Common myeloid progenitor, CD34-positive (primary cell): ENCODE measurements at regions of chr6 and their contacts with region 1.

Region 1: DNA sequence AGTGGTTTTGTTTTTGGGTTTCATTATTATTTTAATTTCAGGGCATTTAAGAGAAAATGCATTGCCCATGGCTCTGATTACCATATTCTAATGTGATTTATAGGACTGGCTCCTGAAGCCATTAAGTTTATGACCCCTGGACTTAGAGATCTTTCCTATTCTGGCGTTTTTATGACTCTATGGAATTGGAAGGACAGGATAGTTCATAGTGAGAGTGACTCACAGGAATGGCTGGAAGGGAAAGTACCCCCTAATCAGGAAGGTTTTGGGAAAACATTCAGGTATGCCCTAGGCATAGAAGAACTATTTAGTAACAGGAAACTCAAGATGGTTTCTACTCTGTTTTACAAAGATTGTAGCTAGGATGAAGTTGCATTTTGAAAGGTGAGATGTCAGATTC is 108.6 kb upstream of the SLC2A12 start:
- DNase-seq: no peak
- H3K4me3 ChIP-seq: no peak overlapping the region
- H3K27ac ChIP-seq: no peak overlapping the region
- H3K4me1 ChIP-seq: no peaks in the 10 kb centered on the region
- H3K27me3 ChIP-seq: no peaks in the 10 kb centered on the region

Region 2: GRCh38 chr6:134145786-134146185 is 15.2 kb before region 1 on chr6:
- CTCF ChIA-PET with region 1: interaction called, 10 read pairs
- POLR2A ChIA-PET with region 1: no interaction called
- DNase-seq: peak; percentile 2 to 62 (median 50)
- H3K4me3 ChIP-seq: no peak overlapping the region
- H3K27ac ChIP-seq: no peak overlapping the region
- H3K4me1 ChIP-seq: no peaks in the 10 kb centered on the region
- H3K27me3 ChIP-seq: no peaks in the 10 kb centered on the region

Region 3: GRCh38 chr6:134174672-134175198 is 13.7 kb after region 1 on chr6:
- CTCF ChIA-PET with region 1: interaction called, 14 read pairs
- POLR2A ChIA-PET with region 1: no interaction called
- DNase-seq: peak; percentile 76 to 86 (median 86)
- H3K4me3 ChIP-seq: peak overlapping the region; percentile 45 to 97 (median 76)
- H3K27ac ChIP-seq: peak overlapping the region in 1 of 2 experiments; percentile 63
- H3K4me1 ChIP-seq: peaks cover 31 to 60% (median 45%) of the 10 kb centered on the region in 4 experiments
- H3K27me3 ChIP-seq: peaks cover 0 to 26% (median 11%) of the 10 kb centered on the region in 5 experiments